ENCODE measurements at regions of chr5 and their contacts with region 1.

Region 1: GRCh38 chr5:96868603-96869371 is 7.5 kb upstream of the ERAP2 start:
- DNase-seq: no peak
- ATAC-seq: peak; percentile 82
- H3K4me3 Mint-ChIP-seq: peak overlapping the region; percentile 54
- H3K27ac Mint-ChIP-seq: peak overlapping the region; percentile 78
- H3K4me1 Mint-ChIP-seq: peaks cover 47% of the 10 kb centered on the region
- H3K27me3 Mint-ChIP-seq: no peaks in the 10 kb centered on the region
- CTCF ChIP-seq: peak; percentile 43

Region 2: GRCh38 chr5:96662725-96663513 is 205.9 kb before region 1 on chr5:
- CTCF ChIA-PET with region 1: no interaction called
- POLR2A ChIA-PET with region 1: no interaction called
- intact Hi-C with region 1: loop called (anchors 5 kb)
- DNase-seq: peak; percentile 89
- ATAC-seq: peak; percentile 72
- H3K4me3 Mint-ChIP-seq: peak overlapping the region; percentile 98
- H3K27ac Mint-ChIP-seq: peak overlapping the region; percentile 98
- H3K4me1 Mint-ChIP-seq: peaks cover 51% of the 10 kb centered on the region
- H3K27me3 Mint-ChIP-seq: no peaks in the 10 kb centered on the region
- CTCF ChIP-seq: no peak

Region 3: DNA sequence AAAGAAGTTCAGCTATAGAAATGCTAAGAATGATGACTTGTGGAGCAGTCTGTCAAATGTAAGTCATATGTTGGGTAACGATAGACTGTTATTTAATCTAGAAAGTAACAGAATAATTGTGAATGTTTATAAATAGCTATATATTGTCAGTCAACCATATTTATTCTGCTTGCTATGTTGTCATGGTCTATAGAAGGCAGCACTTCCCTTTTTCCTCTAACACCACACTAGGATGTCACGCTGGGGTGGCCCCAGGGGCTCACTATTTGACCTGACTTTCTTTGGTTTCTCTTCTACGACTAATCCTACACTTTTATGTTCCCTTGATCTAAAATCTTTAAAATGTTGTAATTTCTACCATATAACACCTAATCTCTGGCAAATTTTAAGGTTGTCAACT is 28.0 kb after region 1 on chr5:
- CTCF ChIA-PET with region 1: interaction called, 66 read pairs
- POLR2A ChIA-PET with region 1: interaction called, 62 read pairs
- intact Hi-C with region 1: loop called (anchors 1 kb)
- DNase-seq: peak; percentile 39
- ATAC-seq: peak; percentile 94
- H3K4me3 Mint-ChIP-seq: peak overlapping the region; percentile 80
- H3K27ac Mint-ChIP-seq: peak overlapping the region; percentile 93
- H3K4me1 Mint-ChIP-seq: peaks cover 54% of the 10 kb centered on the region
- H3K27me3 Mint-ChIP-seq: no peaks in the 10 kb centered on the region
- CTCF ChIP-seq: no peak

Region 4: GRCh38 chr5:96963267-96963666 is 94.5 kb after region 1 on chr5:
- CTCF ChIA-PET with region 1: interaction called, 10 read pairs
- POLR2A ChIA-PET with region 1: interaction called, 4 read pairs
- intact Hi-C with region 1: loop called (anchors 1 kb)
- DNase-seq: no peak
- ATAC-seq: peak; percentile 59
- H3K4me3 Mint-ChIP-seq: no peak overlapping the region
- H3K27ac Mint-ChIP-seq: peak overlapping the region; percentile 90
- H3K4me1 Mint-ChIP-seq: peaks cover 84% of the 10 kb centered on the region
- H3K27me3 Mint-ChIP-seq: no peaks in the 10 kb centered on the region
- CTCF ChIP-seq: no peak

Region 5: DNA sequence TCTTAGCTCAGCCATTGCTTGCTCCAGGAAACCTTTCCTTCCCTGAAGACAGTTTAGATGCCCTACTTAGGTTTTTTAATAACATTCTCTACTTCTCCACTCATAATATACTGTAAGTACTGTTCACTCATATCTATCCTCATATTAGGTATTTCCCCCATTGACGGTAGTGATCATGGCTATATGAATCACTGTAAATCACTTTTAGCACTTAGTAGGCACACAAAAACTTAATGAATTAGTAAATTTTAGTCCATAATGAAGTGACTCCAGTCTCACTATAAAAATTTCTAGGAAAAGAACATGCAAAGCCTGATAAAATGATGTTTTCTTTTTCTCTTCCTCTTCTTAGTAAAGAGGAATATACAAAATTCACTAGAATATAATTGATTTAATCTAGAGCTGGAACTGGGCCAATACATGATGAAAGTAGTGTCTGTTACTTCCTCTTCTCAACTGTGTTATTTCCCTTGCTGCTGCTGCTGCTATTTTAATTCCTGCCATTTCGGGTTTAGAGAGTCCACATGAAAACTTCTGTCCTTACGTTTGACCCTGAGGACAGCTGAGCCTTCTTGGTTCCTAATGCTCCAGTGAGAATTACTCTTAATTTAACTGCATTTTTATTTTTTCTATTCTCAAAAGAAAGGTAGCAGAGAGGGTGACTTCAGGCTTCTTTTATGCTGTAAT is 140.6 kb after region 1 on chr5:
- CTCF ChIA-PET with region 1: interaction called, 13 read pairs
- POLR2A ChIA-PET with region 1: no interaction called
- intact Hi-C with region 1: loop called (anchors 1 kb)
- DNase-seq: no peak
- ATAC-seq: peak; percentile 83
- H3K4me3 Mint-ChIP-seq: peak overlapping the region; percentile 66
- H3K27ac Mint-ChIP-seq: peak overlapping the region; percentile 91
- H3K4me1 Mint-ChIP-seq: peaks cover 24% of the 10 kb centered on the region
- H3K27me3 Mint-ChIP-seq: no peaks in the 10 kb centered on the region
- CTCF ChIP-seq: no peak

Region 6: GRCh38 chr5:97162045-97162444 is 293.3 kb after region 1 on chr5:
- CTCF ChIA-PET with region 1: interaction called, 126 read pairs
- POLR2A ChIA-PET with region 1: interaction called, 7 read pairs
- intact Hi-C with region 1: loop called (anchors 1 kb)
- DNase-seq: no peak
- ATAC-seq: peak; percentile 31
- H3K4me3 Mint-ChIP-seq: no peak overlapping the region
- H3K27ac Mint-ChIP-seq: no peak overlapping the region
- H3K4me1 Mint-ChIP-seq: peaks cover 3% of the 10 kb centered on the region
- H3K27me3 Mint-ChIP-seq: no peaks in the 10 kb centered on the region
- CTCF ChIP-seq: peak; percentile 68

Measured in activated B cell treated with CpG ODN at 0.5 μM for 24 hours (primary cell).